Heart left ventricle (tissue), 16 donors: ENCODE measurements at regions of chr20 and their contacts with region 1.

Region 1: DNA sequence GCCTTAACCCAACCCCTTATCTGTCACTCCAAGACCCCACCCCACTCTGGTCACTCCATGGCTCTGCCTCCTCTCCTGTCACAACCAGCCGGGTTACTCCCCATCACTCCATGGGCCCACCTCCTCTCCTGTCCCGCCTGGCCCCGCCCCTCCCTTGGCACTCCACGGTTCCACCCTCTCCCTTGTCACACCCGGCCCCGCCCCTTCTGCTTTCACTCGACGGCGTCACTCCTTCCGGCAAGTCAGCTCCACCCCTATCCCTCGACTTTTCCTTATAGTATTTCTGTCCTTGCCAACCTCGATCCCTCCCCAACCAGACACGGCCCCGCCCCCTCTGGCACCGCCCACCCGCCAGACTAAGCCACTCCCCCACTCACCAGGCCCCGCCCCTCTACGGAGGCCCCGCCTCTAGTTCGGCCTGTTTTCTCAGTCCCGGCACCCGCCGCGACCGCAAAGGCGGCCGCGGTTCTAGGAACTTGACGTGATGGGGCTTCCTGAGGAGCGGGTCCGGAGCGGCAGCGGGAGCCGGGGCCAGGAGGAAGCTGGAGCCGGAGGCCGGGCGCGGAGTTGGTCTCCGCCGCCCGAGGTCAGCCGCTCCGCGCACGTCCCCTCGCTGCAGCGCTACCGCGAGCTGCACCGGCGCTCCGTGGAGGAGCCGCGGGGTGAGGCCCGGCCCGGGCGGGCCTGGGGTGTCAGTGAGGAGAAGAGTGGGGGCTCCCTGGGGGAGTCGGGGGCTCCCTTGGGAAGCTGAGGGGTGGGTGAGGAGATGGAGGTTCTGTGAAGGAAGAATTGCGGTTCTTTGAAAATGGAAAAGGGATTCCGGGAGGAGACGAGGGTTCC is at the start of gene ACSS2:
- DNase-seq: peak; percentile 99 to 100 (median 100)
- ATAC-seq: peak; percentile 89 to 94 (median 92)
- H3K4me3 ChIP-seq: peak within 1 kb of the TSS; percentile 58 to 98 (median 78)
- H3K27ac ChIP-seq: peak within 1 kb of the TSS; percentile 66 to 95 (median 90)
- H3K4me1 ChIP-seq: peaks cover 2 to 65% (median 38%) of the 10 kb centered on the region in 12 donors
- H3K27me3 ChIP-seq: no peaks in the 10 kb centered on the region
- CTCF ChIP-seq: no peak
- POLR2A ChIP-seq: peak; percentile 65 to 94
- total RNA-seq, gene ACSS2: 87.1 to 113 (median 99.7) TPM

Region 2: GRCh38 chr20:34955232-34956040 is 79.1 kb after region 1 on chr20 and contains the starts of genes GSS and MYH7B:
- intact Hi-C with region 1: loop called (anchors 1 to 2 kb)
- DNase-seq: peak; percentile 97 to 99 (median 98)
- ATAC-seq: peak; percentile 94 to 97 (median 96)
- H3K4me3 ChIP-seq: peak within 1 kb of the TSS; percentile 42 to 85 (median 70)
- H3K27ac ChIP-seq: peak within 1 kb of the TSS; percentile 84 to 96 (median 94)
- H3K4me1 ChIP-seq: peaks cover 0 to 31% (median 20%) of the 10 kb centered on the region in 12 donors
- H3K27me3 ChIP-seq: no peaks in the 10 kb centered on the region
- CTCF ChIP-seq: peak in 11 of 12 donors; percentile 21 to 69 (median 51)
- POLR2A ChIP-seq: peak in 1 of 2 donors; percentile 79
- total RNA-seq, gene GSS: 17.8 to 38.1 (median 26.8) TPM
- total RNA-seq, gene MYH7B: 50.7 to 306 (median 144) TPM

Region 3: DNA sequence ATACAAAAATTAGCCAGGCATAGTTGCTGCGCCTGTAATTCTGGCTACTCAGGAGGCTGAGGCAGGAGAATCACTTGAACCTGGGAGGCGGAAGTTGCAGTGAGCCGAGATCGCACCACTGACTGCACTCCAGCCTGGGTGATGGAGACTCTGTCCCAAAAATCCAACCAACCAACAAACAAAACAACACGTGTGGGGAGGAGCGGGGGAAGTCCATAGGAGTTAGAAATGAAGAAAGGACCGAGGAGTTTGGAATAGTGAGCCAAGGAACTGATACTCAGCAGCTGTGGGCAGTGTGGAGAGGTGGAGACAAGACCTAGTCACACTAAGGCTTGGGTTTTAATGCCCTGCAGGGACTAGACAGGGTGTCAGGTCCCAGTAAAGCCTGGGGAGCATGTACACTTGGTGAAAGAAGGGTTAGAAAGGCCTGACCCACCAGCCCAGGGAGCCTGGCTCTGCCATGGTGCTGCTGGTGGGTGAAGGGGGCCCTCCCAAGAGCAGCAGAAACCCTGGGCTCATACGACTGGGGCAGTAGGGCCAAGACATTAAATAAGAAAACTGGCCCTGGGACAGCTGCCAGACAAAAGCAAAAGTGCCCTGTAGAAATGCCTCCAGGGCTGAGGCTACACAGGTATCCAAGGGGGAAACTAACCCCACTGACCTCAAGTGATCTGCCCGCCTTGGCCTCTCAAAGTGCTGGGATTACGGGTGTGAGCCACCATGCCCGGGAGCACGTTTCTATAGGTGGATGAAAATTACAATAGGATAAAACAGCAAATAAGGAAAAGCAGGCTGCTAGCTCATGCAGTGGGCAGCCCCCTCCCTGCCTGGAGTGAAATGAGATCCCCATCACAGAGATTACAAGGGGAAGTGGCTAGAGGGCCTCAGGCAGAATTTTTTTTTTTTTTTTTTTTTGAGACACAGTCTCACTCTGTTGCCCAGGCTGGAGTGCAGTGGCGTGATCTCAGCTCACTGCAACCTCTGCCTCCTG is 137.3 kb after region 1 on chr20:
- intact Hi-C with region 1: loop called in 4 of 10 experiments (anchors 5 kb)
- DNase-seq: no peak
- ATAC-seq: no peak
- H3K4me3 ChIP-seq: no peak overlapping the region
- H3K27ac ChIP-seq: no peak overlapping the region
- H3K4me1 ChIP-seq: peaks cover 0 to 39% (median 2%) of the 10 kb centered on the region in 12 donors
- H3K27me3 ChIP-seq: no peaks in the 10 kb centered on the region
- CTCF ChIP-seq: no peak
- POLR2A ChIP-seq: no peak

Region 4: GRCh38 chr20:35207950-35208611 is 331.7 kb after region 1 on chr20:
- intact Hi-C with region 1: loop called in 5 of 10 experiments (anchors 2 to 10 kb)
- DNase-seq: peak; percentile 78 to 89 (median 83)
- ATAC-seq: peak; percentile 91 to 96 (median 94)
- H3K4me3 ChIP-seq: peak overlapping the region in 8 of 12 donors; percentile 2 to 35 (median 22)
- H3K27ac ChIP-seq: peak overlapping the region; percentile 19 to 80 (median 71)
- H3K4me1 ChIP-seq: peaks cover 0 to 13% (median 6%) of the 10 kb centered on the region in 12 donors
- H3K27me3 ChIP-seq: no peaks in the 10 kb centered on the region
- CTCF ChIP-seq: peak; percentile 75 to 88 (median 82)
- POLR2A ChIP-seq: no peak

Region 5: GRCh38 chr20:35277531-35278395 is 401.4 kb after region 1 on chr20 and contains the start of gene MMP24OS:
- intact Hi-C with region 1: loop called in 2 of 10 experiments (anchors 10 kb)
- DNase-seq: peak; percentile 91 to 96 (median 95)
- ATAC-seq: peak; percentile 87 to 96 (median 94)
- H3K4me3 ChIP-seq: peak within 1 kb of the TSS; percentile 56 to 100 (median 88)
- H3K27ac ChIP-seq: peak within 1 kb of the TSS; percentile 88 to 100 (median 98)
- H3K4me1 ChIP-seq: peaks cover 2 to 36% (median 13%) of the 10 kb centered on the region in 12 donors
- H3K27me3 ChIP-seq: no peaks in the 10 kb centered on the region
- CTCF ChIP-seq: peak in 6 of 12 donors; percentile 12 to 43 (median 23)
- POLR2A ChIP-seq: peak; percentile 88 to 96
- total RNA-seq, gene MMP24OS: 17.5 to 64.8 (median 41.6) TPM